Panc1 (cell line): ENCODE measurements at regions of chr20 and their contacts with region 1.

Region 1: DNA sequence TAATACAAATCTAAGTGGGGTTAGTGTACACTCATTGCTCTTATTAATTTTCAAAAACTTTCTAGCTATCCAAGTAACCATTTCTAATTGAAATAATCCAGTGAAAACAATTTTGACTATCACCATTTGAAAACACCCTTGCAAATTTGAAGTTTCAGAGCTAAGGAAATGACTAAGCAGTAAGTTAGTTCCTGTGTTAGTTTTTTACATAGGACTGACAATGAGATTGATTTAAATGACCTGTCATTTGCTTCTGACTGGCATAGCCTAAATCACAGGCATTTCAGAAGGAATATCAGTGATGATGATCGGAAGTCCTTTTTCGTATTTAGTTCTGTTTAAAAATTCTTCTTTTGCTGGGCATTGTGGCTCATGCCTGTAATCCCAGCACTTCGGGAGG is 27.0 kb downstream of the STK4 start:
- DNase-seq: peak; percentile 24
- ATAC-seq: no peak
- H3K4me3 ChIP-seq: no peak overlapping the region
- H3K27ac ChIP-seq: no peak overlapping the region
- H3K4me1 ChIP-seq: peaks cover 4% of the 10 kb centered on the region; the same call in 1 of the 2 replicates
- H3K27me3 ChIP-seq: no peaks in the 10 kb centered on the region
- CTCF ChIP-seq: no peak

Region 2: DNA sequence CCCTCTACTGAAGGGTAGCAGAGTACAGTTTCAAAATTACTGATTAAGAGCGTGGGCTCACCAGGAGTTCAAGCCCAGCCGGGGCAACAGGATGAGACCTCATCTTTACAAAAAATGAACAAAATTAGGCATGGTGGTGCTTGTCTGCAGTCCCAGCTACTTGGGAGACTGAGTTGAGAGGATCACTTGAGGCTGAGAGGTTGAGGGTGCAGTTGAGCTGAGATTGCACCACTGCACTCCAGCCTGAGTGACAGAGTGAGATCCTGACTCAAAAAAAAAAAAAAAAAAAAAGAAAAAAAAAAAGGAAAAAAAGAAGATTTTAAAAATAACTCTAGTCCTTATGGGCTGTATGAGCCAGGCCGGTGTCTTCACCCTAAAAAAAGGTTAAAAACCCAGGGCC is 64.7 kb before region 1 on chr20:
- CTCF ChIA-PET with region 1: interaction called, 12 read pairs
- POLR2A ChIA-PET with region 1: no interaction called
- in situ Hi-C with region 1: no loop called
- intact Hi-C with region 1: no loop called
- DNase-seq: no peak
- ATAC-seq: no peak
- H3K4me3 ChIP-seq: no peak overlapping the region
- H3K27ac ChIP-seq: no peak overlapping the region
- H3K4me1 ChIP-seq: no peaks in the 10 kb centered on the region
- H3K27me3 ChIP-seq: no peaks in the 10 kb centered on the region
- CTCF ChIP-seq: no peak

Region 3: DNA sequence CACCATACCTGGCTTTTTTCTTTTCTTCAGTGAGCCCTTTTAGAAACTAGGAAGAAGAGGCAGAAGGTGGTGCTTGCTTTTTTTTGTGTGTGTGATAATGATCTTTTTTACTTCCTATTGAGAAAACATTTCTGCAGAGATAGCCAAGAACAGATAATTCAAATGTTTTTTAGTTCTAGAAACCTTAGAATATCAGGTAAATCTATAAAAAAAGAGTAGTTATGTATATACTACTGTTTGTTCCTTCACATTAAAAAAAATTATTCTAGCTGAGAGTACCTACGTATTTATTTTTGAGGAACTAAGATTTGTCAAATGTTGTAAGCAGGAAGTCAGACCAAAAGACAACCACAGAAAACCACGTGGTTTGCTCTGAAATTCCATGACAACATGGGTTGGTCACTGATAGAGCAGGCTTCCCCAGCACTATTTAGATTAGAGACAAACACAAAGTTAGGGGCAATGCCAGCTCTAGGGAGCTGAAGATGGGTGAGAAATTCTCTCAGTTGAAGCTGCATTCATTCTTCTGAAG is 14.2 kb before region 1 on chr20:
- CTCF ChIA-PET with region 1: no interaction called
- POLR2A ChIA-PET with region 1: no interaction called
- in situ Hi-C with region 1: no loop called
- intact Hi-C with region 1: no loop called
- DNase-seq: no peak
- ATAC-seq: no peak
- H3K4me3 ChIP-seq: no peak overlapping the region
- H3K27ac ChIP-seq: no peak overlapping the region
- H3K4me1 ChIP-seq: no peaks in the 10 kb centered on the region
- H3K27me3 ChIP-seq: no peaks in the 10 kb centered on the region
- CTCF ChIP-seq: no peak